Activated naive CD4-positive, alpha-beta T cell treated with anti-CD3 and anti-CD28 coated beads for 36 hours (primary cell): ENCODE measurements at regions of chr5 and their contacts with region 1.

Region 1: GRCh38 chr5:76256116-76256889 is 146.8 kb upstream of the IQGAP2 start:
- DNase-seq: peak; percentile 79
- H3K4me3 Mint-ChIP-seq: no peak overlapping the region
- H3K27ac Mint-ChIP-seq: no peak overlapping the region
- H3K4me1 Mint-ChIP-seq: peaks cover 2% of the 10 kb centered on the region
- H3K27me3 Mint-ChIP-seq: peaks cover 3% of the 10 kb centered on the region

Region 2: DNA sequence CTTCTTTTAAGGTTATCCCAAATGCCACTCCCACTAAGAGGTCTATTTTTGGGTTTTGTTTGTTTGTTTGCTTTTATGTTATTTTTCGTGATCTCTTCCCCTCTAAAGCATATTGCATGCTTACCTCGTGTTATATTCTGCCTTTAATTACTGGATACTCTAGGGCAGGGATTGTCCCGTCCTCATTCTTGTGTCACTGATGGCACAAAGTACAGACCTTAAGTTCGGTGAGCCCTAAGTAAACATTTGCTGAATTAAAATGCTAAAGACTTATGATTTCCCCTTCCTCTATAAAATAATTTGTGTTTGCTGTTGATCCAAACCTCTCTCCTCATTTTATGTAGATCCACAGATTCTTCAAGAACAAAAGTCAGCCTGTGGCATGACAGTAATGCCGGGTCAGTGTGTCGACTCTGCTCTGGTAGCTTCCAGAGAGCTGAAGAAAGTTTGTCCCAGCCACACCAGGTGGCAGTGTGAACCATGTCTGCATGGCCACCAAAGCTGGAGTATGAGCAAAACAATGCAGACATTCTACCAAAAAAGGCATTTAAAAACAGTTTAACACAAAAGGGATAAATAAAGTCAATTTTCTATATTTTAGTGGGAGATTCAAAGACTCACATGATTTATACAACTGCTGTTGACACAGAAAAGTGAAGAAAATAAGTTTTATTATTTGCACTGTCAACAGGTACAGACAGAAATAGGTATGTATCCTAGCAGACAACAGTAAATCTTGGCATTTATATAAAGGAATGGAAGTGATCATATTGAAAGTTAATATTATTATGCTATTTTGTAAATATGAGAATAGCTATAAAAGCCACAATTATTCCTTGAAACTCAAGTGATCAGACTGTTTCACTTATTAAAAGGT is 521.2 kb before region 1 on chr5:
- CTCF ChIA-PET with region 1: no interaction called
- intact Hi-C with region 1: loop called (anchors 1 kb)
- DNase-seq: peak; percentile 46
- H3K4me3 Mint-ChIP-seq: no peak overlapping the region
- H3K27ac Mint-ChIP-seq: no peak overlapping the region
- H3K4me1 Mint-ChIP-seq: no peaks in the 10 kb centered on the region
- H3K27me3 Mint-ChIP-seq: peaks cover 2% of the 10 kb centered on the region

Region 3: DNA sequence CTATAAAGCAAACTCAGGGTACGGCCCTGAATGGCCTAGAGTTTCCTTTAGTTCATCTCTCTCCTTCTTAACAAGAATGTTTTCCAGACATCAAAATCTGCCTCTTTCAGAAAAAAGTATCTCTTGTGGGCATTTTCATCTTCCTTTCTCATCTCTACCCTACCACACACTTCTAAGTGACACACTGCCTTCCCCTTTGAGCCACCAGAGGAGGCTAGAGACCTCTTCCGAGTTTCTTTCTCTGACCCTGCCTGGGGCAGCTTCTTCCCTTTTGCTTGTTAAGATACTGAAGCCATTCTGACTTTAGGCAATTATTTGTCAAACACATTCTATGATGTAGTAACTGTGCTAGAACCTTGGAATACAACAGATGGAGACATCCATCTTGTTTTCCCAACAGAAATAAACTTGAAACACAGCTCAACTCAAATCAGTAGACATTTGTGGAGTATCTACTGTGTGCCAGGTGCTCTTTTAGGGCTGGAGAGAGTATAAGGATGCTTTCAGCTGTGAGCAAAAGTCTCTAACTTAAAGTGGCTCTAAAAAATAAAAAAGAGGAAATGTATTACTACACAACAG is 181.7 kb before region 1 on chr5:
- CTCF ChIA-PET with region 1: interaction called, 4 read pairs
- intact Hi-C with region 1: loop called (anchors 1 kb)
- DNase-seq: peak; percentile 48
- H3K4me3 Mint-ChIP-seq: no peak overlapping the region
- H3K27ac Mint-ChIP-seq: no peak overlapping the region
- H3K4me1 Mint-ChIP-seq: no peaks in the 10 kb centered on the region
- H3K27me3 Mint-ChIP-seq: peaks cover 36% of the 10 kb centered on the region

Region 4: DNA sequence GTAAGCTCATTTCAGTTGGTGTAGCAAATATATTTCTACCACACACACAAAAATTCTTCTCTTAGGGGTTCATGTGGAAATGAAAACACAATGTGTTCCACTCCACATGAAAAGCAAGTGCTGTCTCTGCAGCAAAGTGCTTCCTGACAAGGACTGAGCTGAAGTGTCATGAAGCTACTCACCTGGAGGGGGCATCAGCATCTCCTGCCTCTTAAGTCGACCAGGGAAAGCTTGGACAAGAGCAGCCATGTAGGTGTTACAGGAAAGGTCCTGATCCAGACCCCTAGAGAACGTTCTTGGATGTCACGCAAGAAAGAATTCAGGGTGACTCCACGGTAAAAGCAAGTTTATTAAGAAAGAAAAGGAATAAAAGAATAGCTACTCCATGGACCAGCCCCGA is 110.4 kb before region 1 on chr5:
- CTCF ChIA-PET with region 1: interaction called, 3 read pairs
- intact Hi-C with region 1: loop called (anchors 1 kb)
- DNase-seq: peak; percentile 22
- H3K4me3 Mint-ChIP-seq: no peak overlapping the region
- H3K27ac Mint-ChIP-seq: no peak overlapping the region
- H3K4me1 Mint-ChIP-seq: no peaks in the 10 kb centered on the region
- H3K27me3 Mint-ChIP-seq: no peaks in the 10 kb centered on the region